ENCODE measurements at regions of chr1 and their contacts with region 1.

Region 1: DNA sequence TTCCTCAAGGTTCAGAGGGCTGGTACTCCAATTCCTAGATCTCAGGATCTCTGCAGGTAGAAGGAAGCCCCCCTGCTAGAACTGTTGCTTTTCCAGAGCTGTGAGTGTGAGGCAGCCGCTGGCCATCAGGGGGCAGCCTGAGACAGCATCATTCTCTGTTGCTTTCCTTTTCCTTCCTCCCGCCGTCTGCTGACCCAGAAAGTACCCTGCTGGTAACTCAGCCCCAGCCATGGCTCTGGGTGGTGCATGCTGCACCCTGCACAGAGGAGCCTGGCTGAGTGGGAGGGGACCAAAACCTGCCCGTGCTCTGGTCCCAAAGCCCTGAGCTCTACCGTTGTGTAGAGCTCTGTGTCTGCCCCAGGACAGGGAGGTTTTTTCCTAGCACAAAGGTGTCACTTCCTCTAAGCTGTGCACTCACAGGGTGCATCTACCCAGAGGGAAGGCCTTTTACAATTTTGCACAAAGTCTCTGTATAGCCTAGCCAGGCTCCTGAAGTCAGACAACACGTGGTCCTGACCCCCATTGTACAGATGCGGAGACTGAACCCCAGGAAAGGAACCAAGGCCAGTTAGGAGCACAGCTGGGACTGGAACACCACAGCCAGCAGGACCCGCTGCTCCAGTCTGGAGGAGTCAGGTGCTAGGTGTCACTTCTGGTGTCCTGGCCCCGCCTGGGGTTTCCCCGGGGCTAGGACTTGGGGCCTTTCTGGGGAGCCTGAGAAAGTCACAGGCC is 5.6 kb upstream of the FAM131C start:
- DNase-seq: peak; percentile 39 to 59
- ATAC-seq: peak; percentile 60 to 62
- H3K4me3 ChIP-seq: peak overlapping the region in 1 of 4 donors; percentile 47
- H3K27ac ChIP-seq: no peak overlapping the region
- H3K4me1 ChIP-seq: peaks cover 3 to 12% of the 10 kb centered on the region in 2 donors
- H3K27me3 ChIP-seq: no peaks in the 10 kb centered on the region
- CTCF ChIP-seq: peak; percentile 79 to 89 (median 86)
- POLR2A ChIP-seq: no peak

Region 2: DNA sequence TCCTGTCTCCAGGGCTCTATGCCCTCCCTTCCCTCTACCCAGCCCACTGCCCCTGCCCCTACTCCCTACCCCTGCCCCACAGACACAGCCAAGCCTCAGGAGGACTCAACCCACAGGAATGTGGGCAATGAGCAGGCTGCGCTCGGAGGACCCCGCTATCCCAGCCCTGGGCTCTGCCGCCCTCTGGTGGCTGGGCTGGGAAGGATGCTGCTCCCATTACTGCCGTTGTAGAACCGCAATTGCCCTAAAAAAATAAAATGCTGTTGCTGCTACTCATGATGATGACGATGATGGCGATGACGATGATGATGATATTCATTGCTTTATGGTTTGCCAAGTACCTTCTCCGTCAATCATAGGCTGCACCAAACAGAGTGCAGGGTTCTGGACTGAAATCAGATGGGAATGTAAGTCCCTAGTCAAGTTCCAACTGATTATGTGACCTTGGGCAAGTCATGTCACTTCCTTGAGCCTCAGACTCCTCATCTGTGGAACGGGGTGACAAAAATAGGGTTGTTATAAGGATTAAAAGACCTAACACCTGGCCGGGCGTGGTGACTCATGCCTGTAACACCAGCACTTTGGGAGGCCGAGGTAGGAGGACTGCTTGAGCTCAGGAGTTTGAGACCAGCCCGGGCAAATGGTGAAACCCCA is 108.8 kb after region 1 on chr1:
- in situ Hi-C with region 1: loop called (anchors 5 to 10 kb)
- intact Hi-C with region 1: loop called (anchors 1 kb)
- DNase-seq: peak in 1 of 2 donors; percentile 50
- ATAC-seq: peak; percentile 24 to 67
- H3K4me3 ChIP-seq: no peak overlapping the region
- H3K27ac ChIP-seq: no peak overlapping the region
- H3K4me1 ChIP-seq: no peaks in the 10 kb centered on the region
- H3K27me3 ChIP-seq: peaks cover 0 to 5% (median 4%) of the 10 kb centered on the region in 3 donors
- CTCF ChIP-seq: peak; percentile 87 to 98 (median 95)
- POLR2A ChIP-seq: no peak